Activated CD8-positive, alpha-beta memory T cell treated with anti-CD3 and anti-CD28 coated beads, Interleukin-2, amount 10 ng/mL, durations not matched to agents 7 days and 5 days (primary cell): ENCODE measurements at regions of chr15 and their contacts with region 1.

Region 1: DNA sequence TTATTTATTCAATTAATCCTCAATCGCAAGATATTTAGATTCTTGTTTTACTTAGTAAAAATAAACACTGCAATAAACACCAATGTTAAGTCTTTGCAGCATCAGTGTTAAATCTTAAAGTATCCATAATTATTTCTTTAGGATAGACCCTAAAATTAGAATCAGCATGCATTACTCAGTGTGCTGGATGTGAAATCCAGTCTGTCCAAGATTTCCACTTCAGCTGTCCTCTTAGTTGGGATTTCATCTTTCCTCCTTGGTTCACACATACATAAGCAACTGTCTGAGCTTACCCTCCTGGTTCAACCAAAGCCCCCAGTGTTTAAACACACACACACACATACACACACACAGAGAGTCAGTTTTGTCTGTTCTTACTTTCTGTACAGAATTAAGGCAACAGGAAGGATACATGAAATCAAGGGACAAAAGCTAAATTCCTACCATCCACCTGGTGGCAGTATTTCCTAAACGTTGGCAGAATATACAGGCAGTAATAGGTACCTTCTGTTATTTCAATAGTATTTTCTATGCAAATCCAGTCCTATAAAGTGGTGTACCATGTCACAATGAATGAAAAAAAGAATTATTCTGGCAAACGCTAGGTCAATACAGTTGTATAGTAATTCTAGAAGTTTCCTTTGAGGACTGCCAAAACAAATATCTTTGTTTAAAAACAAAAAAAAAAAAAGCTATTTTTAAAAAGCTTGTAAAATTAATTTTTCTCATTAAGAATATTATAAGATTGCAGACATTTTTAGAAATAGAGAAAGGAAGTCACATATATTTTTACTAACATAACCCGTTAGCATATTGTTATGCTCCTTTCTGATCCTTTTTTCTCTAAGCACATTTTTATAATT is 27.3 kb upstream of the DMXL2 start:
- DNase-seq: peak; percentile 52
- ATAC-seq: peak; percentile 70
- H3K4me3 Mint-ChIP-seq: no peak overlapping the region
- H3K27ac Mint-ChIP-seq: no peak overlapping the region
- H3K4me1 Mint-ChIP-seq: peaks cover 11% of the 10 kb centered on the region
- H3K27me3 Mint-ChIP-seq: peaks cover 2% of the 10 kb centered on the region

Region 2: GRCh38 chr15:51629612-51630011 is 20.3 kb before region 1 on chr15:
- CTCF ChIA-PET with region 1: no interaction called
- DNase-seq: no peak
- ATAC-seq: no peak
- H3K4me3 Mint-ChIP-seq: no peak overlapping the region
- H3K27ac Mint-ChIP-seq: no peak overlapping the region
- H3K4me1 Mint-ChIP-seq: peaks cover 11% of the 10 kb centered on the region
- H3K27me3 Mint-ChIP-seq: peaks cover 37% of the 10 kb centered on the region

Region 3: GRCh38 chr15:51681303-51681963 is 31.5 kb after region 1 on chr15 and contains the start of gene SCG3:
- CTCF ChIA-PET with region 1: no interaction called
- DNase-seq: peak; percentile 79
- ATAC-seq: peak; percentile 83
- H3K4me3 Mint-ChIP-seq: no peak within 1 kb of the TSS
- H3K27ac Mint-ChIP-seq: no peak within 1 kb of the TSS
- H3K4me1 Mint-ChIP-seq: peaks cover 3% of the 10 kb centered on the region
- H3K27me3 Mint-ChIP-seq: peaks cover 68% of the 10 kb centered on the region
- total RNA-seq, gene SCG3: not detected

Region 4: GRCh38 chr15:51731549-51732267 is 81.8 kb after region 1 on chr15:
- CTCF ChIA-PET with region 1: interaction called, 31 read pairs
- DNase-seq: peak; percentile 62
- ATAC-seq: peak; percentile 69
- H3K4me3 Mint-ChIP-seq: peak overlapping the region; percentile 77
- H3K27ac Mint-ChIP-seq: peak overlapping the region; percentile 97
- H3K4me1 Mint-ChIP-seq: peaks cover 70% of the 10 kb centered on the region
- H3K27me3 Mint-ChIP-seq: no peaks in the 10 kb centered on the region

Region 5: GRCh38 chr15:51737280-51738017 is 87.6 kb after region 1 on chr15 and contains the start of gene LYSMD2:
- CTCF ChIA-PET with region 1: interaction called, 31 read pairs
- DNase-seq: peak; percentile 78
- ATAC-seq: peak; percentile 67
- H3K4me3 Mint-ChIP-seq: peak within 1 kb of the TSS; percentile 92
- H3K27ac Mint-ChIP-seq: peak within 1 kb of the TSS; percentile 87
- H3K4me1 Mint-ChIP-seq: peaks cover 47% of the 10 kb centered on the region
- H3K27me3 Mint-ChIP-seq: no peaks in the 10 kb centered on the region
- total RNA-seq, gene LYSMD2: 16.0 to 21.7 TPM

Region 6: DNA sequence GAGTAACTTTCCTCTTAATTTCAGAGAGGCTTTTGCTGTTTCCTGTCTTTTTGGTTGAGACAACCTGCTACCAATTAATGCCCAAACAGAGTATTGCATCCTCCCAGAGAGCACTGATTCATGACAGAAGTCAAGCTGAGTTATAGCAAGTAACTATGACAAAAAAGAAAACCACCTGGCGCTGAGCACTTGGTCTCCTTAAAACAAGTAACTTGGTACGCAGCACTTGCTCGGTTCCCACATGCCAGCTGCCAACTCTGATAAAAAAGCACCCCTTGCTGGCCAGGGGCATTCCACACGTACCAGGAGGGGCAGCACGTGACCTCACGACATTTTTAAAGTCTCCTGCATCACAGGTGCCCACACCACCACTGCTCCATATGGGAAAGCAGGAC is 659.3 kb after region 1 on chr15:
- CTCF ChIA-PET with region 1: no interaction called
- DNase-seq: no peak
- ATAC-seq: no peak
- H3K4me3 Mint-ChIP-seq: no peak overlapping the region
- H3K27ac Mint-ChIP-seq: no peak overlapping the region
- H3K4me1 Mint-ChIP-seq: peaks cover 4% of the 10 kb centered on the region
- H3K27me3 Mint-ChIP-seq: no peaks in the 10 kb centered on the region